Activated CD8-positive, alpha-beta T cell treated with anti-CD3 and anti-CD28 coated beads for 36 hours (primary cell): ENCODE measurements at regions of chr1 and their contacts with region 1.

Region 1: GRCh38 chr1:152189657-152190442 is 30.8 kb upstream of the RPTN start:
- DNase-seq: peak; percentile 85
- ATAC-seq: peak; percentile 76
- H3K4me3 Mint-ChIP-seq: peak overlapping the region; percentile 66
- H3K27ac Mint-ChIP-seq: peak overlapping the region; percentile 43
- H3K4me1 Mint-ChIP-seq: peaks cover 6% of the 10 kb centered on the region
- H3K27me3 Mint-ChIP-seq: no peaks in the 10 kb centered on the region
- CTCF ChIP-seq: peak; percentile 87

Region 2: GRCh38 chr1:152018537-152018936 is 171.3 kb before region 1 on chr1:
- CTCF ChIA-PET with region 1: no interaction called
- POLR2A ChIA-PET with region 1: no interaction called
- intact Hi-C with region 1: no loop called
- DNase-seq: peak; percentile 65
- ATAC-seq: no peak
- H3K4me3 Mint-ChIP-seq: no peak overlapping the region
- H3K27ac Mint-ChIP-seq: no peak overlapping the region
- H3K4me1 Mint-ChIP-seq: peaks cover 3% of the 10 kb centered on the region
- H3K27me3 Mint-ChIP-seq: peaks cover 5% of the 10 kb centered on the region
- CTCF ChIP-seq: peak; percentile 64

Region 3: GRCh38 chr1:152034646-152035405 is 155.0 kb before region 1 on chr1:
- CTCF ChIA-PET with region 1: interaction called, 10 read pairs
- POLR2A ChIA-PET with region 1: no interaction called
- intact Hi-C with region 1: no loop called
- DNase-seq: peak; percentile 84
- ATAC-seq: peak; percentile 78
- H3K4me3 Mint-ChIP-seq: peak overlapping the region; percentile 92
- H3K27ac Mint-ChIP-seq: peak overlapping the region; percentile 93
- H3K4me1 Mint-ChIP-seq: peaks cover 34% of the 10 kb centered on the region
- H3K27me3 Mint-ChIP-seq: no peaks in the 10 kb centered on the region
- CTCF ChIP-seq: peak; percentile 83

Region 4: DNA sequence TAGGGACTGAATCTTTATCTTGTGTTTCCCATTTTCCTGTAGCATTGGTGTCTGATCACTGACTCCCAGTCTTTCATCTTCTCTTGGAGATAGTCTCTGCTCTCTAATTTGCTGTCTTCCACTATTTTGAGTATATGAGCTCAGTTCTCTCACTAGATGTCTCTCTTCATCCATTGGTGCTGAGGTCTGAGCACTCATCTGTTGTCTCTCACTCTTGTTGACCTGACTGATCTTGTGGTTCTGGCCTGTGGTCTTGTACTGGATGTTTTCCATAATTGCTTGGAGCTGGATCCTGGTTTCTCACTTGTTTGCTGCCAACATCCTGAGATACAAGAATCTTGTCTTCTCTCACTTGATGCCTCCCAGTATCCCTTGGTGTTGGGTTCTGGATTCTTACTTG is 127.9 kb before region 1 on chr1:
- CTCF ChIA-PET with region 1: interaction called, 315 read pairs
- POLR2A ChIA-PET with region 1: no interaction called
- intact Hi-C with region 1: no loop called
- DNase-seq: no peak
- ATAC-seq: no peak
- H3K4me3 Mint-ChIP-seq: no peak overlapping the region
- H3K27ac Mint-ChIP-seq: no peak overlapping the region
- H3K4me1 Mint-ChIP-seq: no peaks in the 10 kb centered on the region
- H3K27me3 Mint-ChIP-seq: peaks cover 22% of the 10 kb centered on the region
- CTCF ChIP-seq: no peak

Region 5: GRCh38 chr1:152141974-152142584 is 47.8 kb before region 1 on chr1:
- CTCF ChIA-PET with region 1: interaction called, 24 read pairs
- POLR2A ChIA-PET with region 1: no interaction called
- intact Hi-C with region 1: loop called (anchors 5 kb)
- DNase-seq: peak; percentile 44
- ATAC-seq: no peak
- H3K4me3 Mint-ChIP-seq: no peak overlapping the region
- H3K27ac Mint-ChIP-seq: no peak overlapping the region
- H3K4me1 Mint-ChIP-seq: peaks cover 8% of the 10 kb centered on the region
- H3K27me3 Mint-ChIP-seq: peaks cover 41% of the 10 kb centered on the region
- CTCF ChIP-seq: peak; percentile 61

Region 6: DNA sequence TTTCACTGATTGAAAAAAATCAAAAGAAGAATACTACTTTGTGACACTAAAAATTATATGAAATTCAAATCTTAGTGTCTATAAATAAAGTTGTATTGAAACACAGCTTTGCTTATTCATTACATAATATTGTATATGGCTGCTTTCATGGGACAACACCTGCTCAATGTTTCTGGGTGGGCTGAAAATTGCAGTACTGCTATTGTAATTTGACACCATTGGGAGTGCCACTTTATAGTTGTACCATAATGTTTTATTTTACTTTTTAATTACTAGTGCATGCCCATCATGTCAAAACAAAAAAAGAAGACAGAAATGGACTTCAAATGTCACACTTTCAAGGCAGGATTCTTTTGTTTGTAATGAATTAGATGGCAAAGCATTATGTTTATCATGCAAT is 14.3 kb before region 1 on chr1:
- CTCF ChIA-PET with region 1: interaction called, 16 read pairs
- POLR2A ChIA-PET with region 1: interaction called, 3 read pairs
- intact Hi-C with region 1: no loop called
- DNase-seq: no peak
- ATAC-seq: no peak
- H3K4me3 Mint-ChIP-seq: no peak overlapping the region
- H3K27ac Mint-ChIP-seq: no peak overlapping the region
- H3K4me1 Mint-ChIP-seq: no peaks in the 10 kb centered on the region
- H3K27me3 Mint-ChIP-seq: peaks cover 5% of the 10 kb centered on the region
- CTCF ChIP-seq: no peak

Region 7: GRCh38 chr1:152440635-152441471 is 251.0 kb after region 1 on chr1:
- CTCF ChIA-PET with region 1: interaction called, 19 read pairs
- POLR2A ChIA-PET with region 1: no interaction called
- intact Hi-C with region 1: loop called (anchors 5 kb)
- DNase-seq: peak; percentile 76
- ATAC-seq: peak; percentile 99
- H3K4me3 Mint-ChIP-seq: no peak overlapping the region
- H3K27ac Mint-ChIP-seq: no peak overlapping the region
- H3K4me1 Mint-ChIP-seq: no peaks in the 10 kb centered on the region
- H3K27me3 Mint-ChIP-seq: peaks cover 24% of the 10 kb centered on the region
- CTCF ChIP-seq: peak; percentile 77